OCI-LY7 (cell line): ENCODE measurements at regions of chr2 and their contacts with region 1.

Region 1: GRCh38 chr2:147937744-147938349 is 82.7 kb downstream of the ORC4 start:
- DNase-seq: peak; percentile 41
- H3K4me3 ChIP-seq: no peak overlapping the region
- H3K27ac ChIP-seq: no peak overlapping the region
- H3K4me1 ChIP-seq: no peaks in the 10 kb centered on the region
- CTCF ChIP-seq: peak; percentile 98

Region 2: DNA sequence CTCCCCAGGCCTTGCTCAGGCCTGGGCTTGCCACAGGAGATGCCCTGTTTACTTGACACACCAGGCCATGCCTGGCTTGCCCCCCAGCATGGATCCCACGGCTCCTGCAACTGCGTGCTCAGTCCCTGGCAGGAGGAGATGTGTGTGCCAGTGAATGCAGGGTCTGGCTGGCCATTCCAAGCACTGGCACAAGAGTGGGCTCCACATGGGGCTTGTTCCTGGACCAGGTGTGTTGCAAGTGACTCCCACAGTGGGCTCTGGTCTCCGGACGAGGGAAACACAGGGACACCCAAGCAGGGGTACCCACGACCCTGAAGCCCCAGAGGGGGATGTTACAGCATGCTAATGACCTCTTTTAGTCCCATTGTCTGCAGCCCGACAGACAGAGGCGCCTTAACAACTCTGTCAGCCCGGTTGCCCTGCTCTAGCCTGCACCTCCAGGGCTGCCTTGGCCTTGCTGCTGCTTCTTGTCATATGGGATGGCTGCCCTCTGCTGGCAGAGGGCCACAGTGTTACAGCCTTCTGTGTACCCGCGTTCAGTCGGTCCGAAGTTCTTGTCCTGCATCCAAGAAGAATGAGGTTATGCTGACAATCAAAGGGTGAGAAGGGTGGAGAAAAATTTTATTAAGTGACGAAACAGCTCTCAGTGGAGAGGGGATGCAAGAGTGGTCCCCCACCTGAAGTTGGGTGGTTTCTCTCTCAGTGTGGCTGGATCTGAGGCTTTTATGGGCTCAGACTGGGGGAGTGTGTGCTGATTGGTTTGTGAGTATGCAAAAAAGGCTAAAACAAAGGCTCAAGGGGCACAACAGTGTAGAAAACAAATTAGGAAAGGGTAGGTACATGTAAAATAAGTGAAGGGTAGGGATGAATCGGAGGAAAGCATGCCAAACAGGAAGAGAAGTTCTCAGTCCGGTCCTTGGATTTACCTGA is 263.5 kb after region 1 on chr2:
- CTCF ChIA-PET with region 1: no interaction called
- POLR2A ChIA-PET with region 1: no interaction called
- intact Hi-C with region 1: loop called (anchors 5 kb)
- DNase-seq: peak; percentile 40
- H3K4me3 ChIP-seq: no peak overlapping the region
- H3K27ac ChIP-seq: no peak overlapping the region
- H3K4me1 ChIP-seq: no peaks in the 10 kb centered on the region
- CTCF ChIP-seq: peak; percentile 66

Region 3: DNA sequence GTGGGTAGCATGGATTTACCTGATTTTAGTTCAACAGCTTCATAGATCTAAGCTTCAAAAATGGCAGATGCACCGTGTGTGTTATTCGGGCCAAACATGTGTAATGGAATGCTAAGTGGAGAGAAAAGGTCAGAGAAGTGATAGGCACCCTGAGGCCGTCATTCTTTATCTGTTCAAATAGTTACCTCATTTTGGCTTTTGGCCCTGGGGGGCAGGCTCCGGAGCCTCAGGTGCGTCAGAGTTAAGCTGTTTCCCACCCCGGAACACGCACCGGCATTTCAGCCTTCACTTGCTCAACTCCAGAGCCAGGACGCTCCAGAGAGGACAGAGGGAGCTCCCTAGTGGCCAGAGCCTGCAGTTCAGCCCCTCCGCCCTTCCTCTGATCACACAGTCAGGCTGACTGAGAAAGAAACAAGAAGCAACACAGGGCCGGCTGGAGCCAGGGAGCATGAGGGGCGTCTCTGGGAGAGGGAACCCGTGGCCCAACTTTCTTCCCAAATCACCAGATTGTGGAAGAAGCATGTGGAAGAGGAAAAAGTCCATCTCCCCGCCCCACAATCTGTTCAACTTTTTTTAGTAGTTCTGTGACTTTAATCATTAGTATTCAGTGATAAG is 571.5 kb after region 1 on chr2:
- CTCF ChIA-PET with region 1: no interaction called
- POLR2A ChIA-PET with region 1: no interaction called
- intact Hi-C with region 1: loop called (anchors 1 kb)
- DNase-seq: peak; percentile 80
- H3K4me3 ChIP-seq: peak overlapping the region; percentile 26
- H3K27ac ChIP-seq: no peak overlapping the region
- H3K4me1 ChIP-seq: no peaks in the 10 kb centered on the region
- CTCF ChIP-seq: peak; percentile 94

Region 4: DNA sequence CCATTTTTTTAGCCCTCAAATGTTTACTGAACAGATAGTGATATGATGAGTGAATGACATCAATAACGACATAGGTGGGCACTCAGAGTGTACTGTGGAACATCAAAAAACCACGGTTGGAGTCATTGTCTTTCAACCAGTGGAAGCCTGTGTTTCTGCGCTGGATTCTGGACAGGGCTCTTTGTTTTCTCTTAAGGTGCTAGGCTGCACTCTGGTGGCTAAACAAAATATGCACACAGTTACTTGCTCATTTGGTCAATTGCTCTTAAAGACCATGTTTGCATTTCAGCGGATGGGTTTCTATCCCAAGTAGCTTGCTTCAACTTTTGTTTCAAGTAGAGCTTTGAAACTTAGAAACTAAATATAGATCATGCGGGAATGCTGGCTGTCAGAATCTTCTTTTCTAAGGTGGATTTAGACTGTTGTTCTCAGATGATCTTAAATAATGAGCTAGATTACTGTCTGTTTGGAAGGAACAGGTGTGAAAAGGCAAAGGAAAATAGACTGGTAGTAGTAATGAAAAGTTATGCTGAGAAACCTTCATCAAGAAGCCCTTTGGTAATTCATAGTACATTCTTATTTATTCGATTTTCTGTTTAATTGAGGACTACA is 1052.1 kb after region 1 on chr2:
- CTCF ChIA-PET with region 1: no interaction called
- POLR2A ChIA-PET with region 1: no interaction called
- intact Hi-C with region 1: loop called (anchors 5 kb)
- DNase-seq: peak; percentile 68
- H3K4me3 ChIP-seq: no peak overlapping the region
- H3K27ac ChIP-seq: no peak overlapping the region
- H3K4me1 ChIP-seq: no peaks in the 10 kb centered on the region
- CTCF ChIP-seq: peak; percentile 85